ENCODE measurements at regions of chr1 and their contacts with region 1.

Region 1: GRCh38 chr1:111145963-111146768 is 6.1 kb downstream of the CEPT1 start:
- DNase-seq: no peak
- ATAC-seq: no peak
- H3K4me3 ChIP-seq: no peak overlapping the region
- H3K4me3 Mint-ChIP-seq: peak overlapping the region in 8 of 10 donors; percentile 1 to 44 (median 24)
- H3K27ac ChIP-seq: no peak overlapping the region
- H3K27ac Mint-ChIP-seq: peak overlapping the region in 7 of 9 donors; percentile 1 to 59 (median 32)
- H3K4me1 ChIP-seq: peaks cover 10 to 31% of the 10 kb centered on the region in 2 donors
- H3K4me1 Mint-ChIP-seq: peaks cover 44 to 94% (median 80%) of the 10 kb centered on the region in 7 donors
- H3K27me3 ChIP-seq: no peaks in the 10 kb centered on the region
- H3K27me3 Mint-ChIP-seq: no peaks in the 10 kb centered on the region

Region 2: DNA sequence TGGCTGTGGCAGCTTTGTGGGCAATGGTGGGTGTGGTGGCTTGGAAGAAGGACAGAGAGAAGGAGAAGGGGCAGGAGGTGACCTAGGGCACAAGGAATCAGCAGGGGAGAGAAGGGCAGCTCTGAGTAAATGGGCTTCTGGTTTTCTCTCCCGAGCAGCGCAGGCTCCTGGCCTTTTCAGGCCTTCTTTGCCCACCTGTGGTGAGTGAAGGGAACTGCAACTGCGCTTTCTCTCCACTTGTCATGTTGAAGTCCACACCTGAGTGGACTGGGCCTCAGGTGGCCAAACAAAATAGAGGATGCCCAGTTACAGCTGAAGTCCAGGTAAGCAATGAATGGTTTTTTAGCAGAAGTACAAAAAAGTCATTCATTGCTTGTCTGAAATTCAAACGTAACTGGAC is 597.8 kb before region 1 on chr1:
- CTCF ChIA-PET with region 1: no interaction called
- POLR2A ChIA-PET with region 1: no interaction called
- intact Hi-C with region 1: no loop called
- DNase-seq: no peak
- ATAC-seq: no peak
- H3K4me3 ChIP-seq: no peak overlapping the region
- H3K4me3 Mint-ChIP-seq: no peak overlapping the region
- H3K27ac ChIP-seq: no peak overlapping the region
- H3K27ac Mint-ChIP-seq: no peak overlapping the region
- H3K4me1 ChIP-seq: no peaks in the 10 kb centered on the region
- H3K4me1 Mint-ChIP-seq: no peaks in the 10 kb centered on the region
- H3K27me3 ChIP-seq: no peaks in the 10 kb centered on the region
- H3K27me3 Mint-ChIP-seq: peaks cover 20 to 50% (median 39%) of the 10 kb centered on the region in 5 donors

Region 3: GRCh38 chr1:110986407-110986891 is 159.7 kb before region 1 on chr1:
- CTCF ChIA-PET with region 1: no interaction called
- POLR2A ChIA-PET with region 1: no interaction called
- intact Hi-C with region 1: no loop called
- DNase-seq: no peak
- ATAC-seq: no peak
- H3K4me3 ChIP-seq: no peak overlapping the region
- H3K4me3 Mint-ChIP-seq: no peak overlapping the region
- H3K27ac ChIP-seq: no peak overlapping the region
- H3K27ac Mint-ChIP-seq: no peak overlapping the region
- H3K4me1 ChIP-seq: peaks cover 0 to 17% of the 10 kb centered on the region in 2 donors
- H3K4me1 Mint-ChIP-seq: peaks cover 0 to 10% (median 7%) of the 10 kb centered on the region in 7 donors
- H3K27me3 ChIP-seq: no peaks in the 10 kb centered on the region
- H3K27me3 Mint-ChIP-seq: peaks cover 0 to 29% (median 9%) of the 10 kb centered on the region in 5 donors

Region 4: GRCh38 chr1:111161843-111162487 is 15.8 kb after region 1 on chr1:
- CTCF ChIA-PET with region 1: no interaction called
- POLR2A ChIA-PET with region 1: no interaction called
- intact Hi-C with region 1: loop called in 1 of 2 experiments (anchors 2 kb)
- DNase-seq: no peak
- ATAC-seq: no peak
- H3K4me3 ChIP-seq: no peak overlapping the region
- H3K4me3 Mint-ChIP-seq: no peak overlapping the region
- H3K27ac ChIP-seq: no peak overlapping the region
- H3K27ac Mint-ChIP-seq: peak overlapping the region in 8 of 9 donors; percentile 4 to 66 (median 22)
- H3K4me1 ChIP-seq: no peaks in the 10 kb centered on the region
- H3K4me1 Mint-ChIP-seq: peaks cover 8 to 51% (median 33%) of the 10 kb centered on the region in 7 donors
- H3K27me3 ChIP-seq: no peaks in the 10 kb centered on the region
- H3K27me3 Mint-ChIP-seq: no peaks in the 10 kb centered on the region

Measured in naive thymus-derived CD4-positive, alpha-beta T cell (primary cell).